ENCODE measurements at regions of chr4 and their contacts with region 1.

Region 1: GRCh38 chr4:48223633-48224295 is 45.9 kb downstream of the TEC start:
- DNase-seq: no peak
- ATAC-seq: no peak
- H3K4me3 ChIP-seq: no peak overlapping the region
- H3K4me3 Mint-ChIP-seq: no peak overlapping the region
- H3K27ac ChIP-seq: no peak overlapping the region
- H3K27ac Mint-ChIP-seq: no peak overlapping the region
- H3K4me1 ChIP-seq: no peaks in the 10 kb centered on the region
- H3K4me1 Mint-ChIP-seq: peaks cover 0 to 4% (median 0%) of the 10 kb centered on the region in 3 donors
- H3K27me3 ChIP-seq: no peaks in the 10 kb centered on the region
- H3K27me3 Mint-ChIP-seq: no peaks in the 10 kb centered on the region

Region 2: DNA sequence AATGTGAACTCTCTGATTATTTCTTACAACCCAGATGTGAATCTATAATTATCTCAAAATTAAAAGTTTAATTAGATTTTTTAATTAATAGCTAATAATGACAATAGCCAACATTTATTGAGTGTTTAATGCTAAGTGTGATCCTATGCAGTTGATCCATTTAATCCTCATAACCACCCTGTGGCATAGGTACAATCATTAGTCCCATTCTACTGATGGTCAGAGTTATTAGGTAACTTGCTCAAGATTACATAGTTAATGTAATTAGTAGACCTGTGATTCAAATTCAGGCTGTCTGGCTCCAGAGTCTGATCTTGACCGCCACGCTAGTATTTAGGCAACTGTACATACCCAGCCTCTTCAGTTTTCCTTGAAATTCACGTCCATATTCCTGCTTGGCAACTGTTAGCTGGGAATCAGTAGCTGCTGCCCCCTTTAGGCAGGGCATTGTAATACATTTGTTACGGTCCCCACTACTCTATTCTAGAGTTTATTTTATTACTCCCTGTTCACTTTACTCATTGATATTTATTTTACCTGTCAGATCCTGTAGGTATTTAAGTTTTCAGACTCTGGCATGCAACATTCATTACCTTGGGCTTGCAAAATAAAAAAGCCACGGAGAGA is 66.5 kb after region 1 on chr4:
- CTCF ChIA-PET with region 1: no interaction called
- POLR2A ChIA-PET with region 1: no interaction called
- DNase-seq: peak in 2 of 35 experiments; percentile 8 to 39
- ATAC-seq: no peak
- H3K4me3 ChIP-seq: no peak overlapping the region
- H3K4me3 Mint-ChIP-seq: no peak overlapping the region
- H3K27ac ChIP-seq: no peak overlapping the region
- H3K27ac Mint-ChIP-seq: no peak overlapping the region
- H3K4me1 ChIP-seq: no peaks in the 10 kb centered on the region
- H3K4me1 Mint-ChIP-seq: no peaks in the 10 kb centered on the region
- H3K27me3 ChIP-seq: no peaks in the 10 kb centered on the region
- H3K27me3 Mint-ChIP-seq: no peaks in the 10 kb centered on the region

Region 3: GRCh38 chr4:48509543-48509942 is 285.8 kb after region 1 on chr4:
- CTCF ChIA-PET with region 1: no interaction called
- POLR2A ChIA-PET with region 1: no interaction called
- DNase-seq: no peak
- ATAC-seq: no peak
- H3K4me3 ChIP-seq: no peak overlapping the region
- H3K4me3 Mint-ChIP-seq: no peak overlapping the region
- H3K27ac ChIP-seq: no peak overlapping the region
- H3K27ac Mint-ChIP-seq: no peak overlapping the region
- H3K4me1 ChIP-seq: no peaks in the 10 kb centered on the region
- H3K4me1 Mint-ChIP-seq: no peaks in the 10 kb centered on the region
- H3K27me3 ChIP-seq: no peaks in the 10 kb centered on the region
- H3K27me3 Mint-ChIP-seq: no peaks in the 10 kb centered on the region

Region 4: DNA sequence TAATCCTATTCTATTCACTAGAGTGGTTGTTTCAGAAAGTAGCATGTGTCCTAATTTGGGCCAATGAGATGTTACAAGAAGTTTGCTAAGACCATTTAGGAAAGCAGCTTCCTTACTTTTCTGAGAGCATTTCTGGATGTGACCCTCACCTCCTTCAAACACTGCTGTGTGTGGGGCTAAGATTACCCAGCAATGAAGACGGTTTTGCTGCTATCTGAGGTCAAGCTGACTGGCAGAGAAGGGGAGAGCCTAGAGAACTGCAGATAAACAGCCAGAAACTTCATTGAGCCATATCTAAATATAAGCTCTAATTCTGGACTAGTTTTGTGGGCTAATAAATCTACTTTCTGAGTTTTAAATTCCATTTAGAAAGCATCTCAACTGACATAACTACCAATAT is 302.6 kb after region 1 on chr4:
- CTCF ChIA-PET with region 1: no interaction called
- POLR2A ChIA-PET with region 1: interaction called in 1 of 2 experiments, 15 read pairs
- DNase-seq: no peak
- ATAC-seq: no peak
- H3K4me3 ChIP-seq: no peak overlapping the region
- H3K4me3 Mint-ChIP-seq: no peak overlapping the region
- H3K27ac ChIP-seq: no peak overlapping the region
- H3K27ac Mint-ChIP-seq: no peak overlapping the region
- H3K4me1 ChIP-seq: no peaks in the 10 kb centered on the region
- H3K4me1 Mint-ChIP-seq: no peaks in the 10 kb centered on the region
- H3K27me3 ChIP-seq: no peaks in the 10 kb centered on the region
- H3K27me3 Mint-ChIP-seq: no peaks in the 10 kb centered on the region